Heart right ventricle (tissue), 16 donors: ENCODE measurements at regions of chr7 and their contacts with region 1.

Region 1: GRCh38 chr7:116809636-116810266 is 52.6 kb upstream of the CAPZA2 start:
- DNase-seq: peak in 1 of 2 donors; percentile 51
- ATAC-seq: peak in 7 of 8 donors; percentile 55 to 80 (median 68)
- H3K4me3 ChIP-seq: no peak overlapping the region
- H3K27ac ChIP-seq: no peak overlapping the region
- H3K4me1 ChIP-seq: peaks cover 0 to 17% (median 0%) of the 10 kb centered on the region in 9 donors
- H3K27me3 ChIP-seq: no peaks in the 10 kb centered on the region
- CTCF ChIP-seq: peak; percentile 55 to 83 (median 71)

Region 2: GRCh38 chr7:116165717-116166116 is 644.0 kb before region 1 on chr7:
- intact Hi-C with region 1: loop called in 6 of 10 experiments (anchors 5 to 10 kb)
- DNase-seq: no peak
- ATAC-seq: peak in 2 of 8 donors; percentile 35 to 54
- H3K4me3 ChIP-seq: no peak overlapping the region
- H3K27ac ChIP-seq: peak overlapping the region in 1 of 10 donors; percentile 71
- H3K4me1 ChIP-seq: peaks cover 0 to 26% (median 0%) of the 10 kb centered on the region in 9 donors
- H3K27me3 ChIP-seq: peaks cover 0 to 6% (median 0%) of the 10 kb centered on the region in 7 donors
- CTCF ChIP-seq: no peak

Region 3: DNA sequence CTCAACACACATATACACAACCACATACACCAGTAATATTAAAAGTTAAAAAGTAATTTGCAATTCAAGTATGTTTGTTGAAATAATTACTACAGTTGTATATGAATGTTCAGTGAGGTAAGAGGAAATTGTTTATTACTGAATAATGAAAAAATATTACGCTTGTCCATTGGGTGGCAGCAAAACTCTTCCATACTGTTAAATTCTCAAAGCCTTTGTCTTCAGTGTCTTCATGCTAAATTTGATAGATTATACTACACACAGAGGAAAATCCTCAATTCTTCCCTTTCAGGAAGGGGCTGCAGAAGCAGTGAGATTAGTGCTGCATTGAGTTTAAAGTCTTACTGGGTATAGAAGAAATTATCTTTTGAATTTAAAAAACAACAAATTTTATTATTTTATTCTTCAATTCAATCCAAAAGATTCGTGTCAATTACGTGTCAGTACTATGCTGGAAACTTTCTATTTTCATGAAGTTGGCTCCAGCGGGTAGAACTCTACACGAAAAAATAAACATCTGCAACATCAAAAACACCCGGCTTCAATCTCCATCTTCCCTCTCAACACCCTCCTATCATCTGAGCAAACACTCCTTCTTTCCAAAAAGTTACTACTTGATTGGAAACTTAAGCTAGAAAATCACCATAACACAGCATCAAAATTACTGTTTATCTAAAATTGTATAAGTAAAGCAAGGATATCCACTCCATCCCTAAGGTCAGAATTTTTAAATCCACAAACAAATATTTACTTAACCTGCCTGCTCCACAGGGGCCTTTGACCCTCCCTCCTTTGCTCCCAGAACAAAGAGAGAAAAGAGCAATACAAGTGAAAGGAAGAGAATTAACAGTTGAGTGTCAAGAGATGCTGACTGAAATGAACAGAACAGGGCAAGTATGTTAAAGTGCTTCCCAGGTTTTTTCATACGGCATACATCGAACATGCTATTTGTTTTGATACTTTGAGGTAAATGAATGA is 636.4 kb before region 1 on chr7:
- intact Hi-C with region 1: loop called in 9 of 10 experiments (anchors 2 to 10 kb)
- DNase-seq: peak in 1 of 2 donors; percentile 28
- ATAC-seq: peak in 5 of 8 donors; percentile 42 to 50 (median 48)
- H3K4me3 ChIP-seq: no peak overlapping the region
- H3K27ac ChIP-seq: no peak overlapping the region
- H3K4me1 ChIP-seq: peaks cover 0 to 5% (median 0%) of the 10 kb centered on the region in 9 donors
- H3K27me3 ChIP-seq: no peaks in the 10 kb centered on the region
- CTCF ChIP-seq: peak; percentile 24 to 76 (median 63)

Region 4: DNA sequence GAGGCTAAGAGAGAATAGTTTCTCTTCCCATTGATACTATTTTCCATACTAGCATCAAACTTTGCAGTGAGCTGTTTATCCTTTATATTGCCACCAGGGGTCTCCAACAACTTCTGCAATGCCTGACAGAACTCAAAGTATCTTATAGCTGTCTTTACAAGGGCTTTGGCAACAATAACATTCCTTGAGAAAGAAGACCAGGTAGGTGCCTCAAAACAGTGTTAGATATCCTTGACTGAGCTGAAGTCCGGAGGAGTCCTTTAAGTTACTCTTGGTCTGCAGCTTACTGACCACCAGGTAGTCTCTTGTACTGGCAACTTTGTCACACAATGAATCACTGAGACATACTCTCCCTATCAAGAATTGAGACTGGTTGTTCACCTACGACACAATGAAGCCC is 629.4 kb before region 1 on chr7:
- intact Hi-C with region 1: loop called in 4 of 10 experiments (anchors 5 to 10 kb)
- DNase-seq: peak in 1 of 2 donors; percentile 14
- ATAC-seq: peak in 6 of 8 donors; percentile 42 to 78 (median 58)
- H3K4me3 ChIP-seq: no peak overlapping the region
- H3K27ac ChIP-seq: no peak overlapping the region
- H3K4me1 ChIP-seq: no peaks in the 10 kb centered on the region
- H3K27me3 ChIP-seq: no peaks in the 10 kb centered on the region
- CTCF ChIP-seq: peak; percentile 61 to 88 (median 79)

Region 5: DNA sequence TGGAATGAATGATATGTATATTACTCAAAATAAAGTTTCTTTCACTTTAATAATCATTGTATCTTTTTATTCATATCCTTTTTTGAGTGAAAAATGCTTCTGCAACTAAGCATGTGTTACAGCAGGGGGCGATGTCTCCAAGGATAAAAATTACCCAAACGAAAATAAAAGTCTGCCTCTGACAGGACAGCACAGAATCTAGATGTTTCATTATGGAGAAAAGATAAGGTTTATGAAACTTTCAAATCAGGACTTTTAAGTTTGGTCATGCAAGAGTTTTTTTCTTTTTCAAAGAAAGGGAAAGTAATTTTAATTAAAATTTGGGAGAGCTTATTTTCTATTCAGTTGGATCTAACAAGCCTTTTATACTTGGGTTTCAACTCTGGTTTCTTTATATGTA is 551.0 kb before region 1 on chr7:
- intact Hi-C with region 1: loop called (anchors 2 to 10 kb)
- DNase-seq: peak in 1 of 2 donors; percentile 26
- ATAC-seq: peak in 6 of 8 donors; percentile 67 to 79 (median 72)
- H3K4me3 ChIP-seq: no peak overlapping the region
- H3K27ac ChIP-seq: peak overlapping the region in 6 of 10 donors; percentile 0 to 42 (median 28)
- H3K4me1 ChIP-seq: peaks cover 0 to 15% (median 5%) of the 10 kb centered on the region in 9 donors
- H3K27me3 ChIP-seq: no peaks in the 10 kb centered on the region
- CTCF ChIP-seq: peak; percentile 59 to 89 (median 85)

Region 6: GRCh38 chr7:116598278-116598677 is 211.5 kb before region 1 on chr7:
- intact Hi-C with region 1: loop called in 6 of 10 experiments (anchors 2 to 5 kb)
- DNase-seq: no peak
- ATAC-seq: peak in 1 of 8 donors; percentile 44
- H3K4me3 ChIP-seq: no peak overlapping the region
- H3K27ac ChIP-seq: no peak overlapping the region
- H3K4me1 ChIP-seq: peaks cover 0 to 2% (median 0%) of the 10 kb centered on the region in 9 donors
- H3K27me3 ChIP-seq: peaks cover 0 to 6% (median 0%) of the 10 kb centered on the region in 7 donors
- CTCF ChIP-seq: peak in 7 of 9 donors; percentile 15 to 47 (median 30)

Region 7: GRCh38 chr7:116671681-116672595 is 137.8 kb before region 1 on chr7 and contains the start of gene MET:
- intact Hi-C with region 1: loop called in 8 of 10 experiments (anchors 2 to 5 kb)
- DNase-seq: peak; percentile 68 to 77
- ATAC-seq: peak; percentile 86 to 95 (median 92)
- H3K4me3 ChIP-seq: peak within 1 kb of the TSS; percentile 41 to 69 (median 64)
- H3K27ac ChIP-seq: peak within 1 kb of the TSS; percentile 43 to 86 (median 78)
- H3K4me1 ChIP-seq: peaks cover 0 to 48% (median 14%) of the 10 kb centered on the region in 9 donors
- H3K27me3 ChIP-seq: peaks cover 0 to 60% (median 0%) of the 10 kb centered on the region in 7 donors
- CTCF ChIP-seq: peak; percentile 19 to 71 (median 54)
- total RNA-seq, gene MET: 11.0 to 23.3 (median 15.6) TPM

Region 8: DNA sequence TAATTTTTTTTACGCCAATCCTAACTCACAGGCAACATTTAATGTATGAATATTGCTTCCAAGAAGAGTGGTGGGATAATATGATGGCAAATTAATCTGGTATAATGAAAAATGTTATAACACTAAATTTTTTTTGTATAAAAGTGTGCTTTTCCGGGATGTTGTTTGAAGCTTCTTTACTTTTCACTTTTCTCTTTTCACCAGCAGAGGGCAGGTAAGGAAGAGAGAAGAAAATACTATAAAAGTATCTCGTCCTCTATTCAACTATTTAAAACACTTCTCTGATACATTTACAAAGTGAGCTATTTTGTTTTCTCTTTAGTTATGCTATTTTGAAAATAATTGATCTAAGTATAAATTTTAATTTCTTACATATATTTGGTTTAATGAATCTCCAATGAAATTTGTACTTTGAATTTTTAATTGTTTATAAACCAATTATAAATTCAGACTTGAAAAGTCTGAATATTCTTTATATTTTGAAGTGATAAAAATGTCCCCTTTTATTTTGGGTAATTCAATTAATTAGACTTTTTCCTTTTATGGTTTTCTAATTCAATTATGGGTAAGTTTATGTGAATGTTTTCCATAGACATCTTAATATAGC is 649.3 kb after region 1 on chr7:
- intact Hi-C with region 1: no loop called
- DNase-seq: no peak
- ATAC-seq: no peak
- H3K4me3 ChIP-seq: no peak overlapping the region
- H3K27ac ChIP-seq: no peak overlapping the region
- H3K4me1 ChIP-seq: no peaks in the 10 kb centered on the region
- H3K27me3 ChIP-seq: peaks cover 0 to 5% (median 0%) of the 10 kb centered on the region in 7 donors
- CTCF ChIP-seq: peak; percentile 28 to 70 (median 60)